Heart left ventricle (tissue), 16 donors: ENCODE measurements at regions of chr9 and their contacts with region 1.

Region 1: GRCh38 chr9:693201-694091 is 148.1 kb upstream of the DMRT1 start:
- DNase-seq: peak in 4 of 5 donors; percentile 67 to 82 (median 78)
- ATAC-seq: peak; percentile 62 to 77 (median 67)
- H3K4me3 ChIP-seq: peak overlapping the region in 11 of 12 donors; percentile 18 to 59 (median 48)
- H3K27ac ChIP-seq: peak overlapping the region; percentile 87 to 97 (median 92)
- H3K4me1 ChIP-seq: peaks cover 3 to 84% (median 59%) of the 10 kb centered on the region in 12 donors
- H3K27me3 ChIP-seq: no peaks in the 10 kb centered on the region
- CTCF ChIP-seq: peak in 1 of 12 donors; percentile 15
- POLR2A ChIP-seq: peak; percentile 8 to 73

Region 2: DNA sequence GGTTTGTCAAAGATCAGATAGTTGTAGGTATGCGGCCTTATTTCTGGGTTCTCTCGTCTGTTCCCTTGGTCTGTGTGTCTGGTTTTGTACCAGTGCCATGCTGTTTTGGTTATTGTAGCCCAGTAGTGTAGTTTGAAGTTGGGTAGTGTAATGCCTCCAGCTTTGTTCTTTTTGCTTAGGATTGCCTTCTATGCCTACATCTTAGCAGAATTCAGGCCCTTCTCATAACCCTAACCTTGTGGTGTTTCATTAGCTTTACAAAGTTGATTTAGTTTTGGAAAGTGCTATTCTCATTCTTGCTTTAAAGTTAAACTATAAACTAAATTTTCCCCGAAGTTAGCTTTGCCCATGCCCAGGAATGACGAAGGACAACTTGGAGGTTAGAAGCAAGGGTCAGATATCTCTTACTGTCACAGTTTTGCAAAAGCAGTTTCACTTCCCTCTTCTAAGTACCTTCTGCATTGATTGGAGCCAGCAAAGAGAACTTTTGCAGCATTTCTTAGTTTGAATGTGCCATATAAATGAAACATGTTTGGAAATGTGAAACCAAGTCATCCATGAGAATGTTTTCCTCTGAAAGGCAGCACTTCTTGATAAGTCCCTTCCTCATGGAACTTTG is 126.2 kb before region 1 on chr9:
- intact Hi-C with region 1: no loop called
- DNase-seq: no peak
- ATAC-seq: no peak
- H3K4me3 ChIP-seq: no peak overlapping the region
- H3K27ac ChIP-seq: peak overlapping the region in 3 of 12 donors; percentile 11 to 24 (median 20)
- H3K4me1 ChIP-seq: peaks cover 0 to 46% (median 14%) of the 10 kb centered on the region in 12 donors
- H3K27me3 ChIP-seq: no peaks in the 10 kb centered on the region
- CTCF ChIP-seq: no peak
- POLR2A ChIP-seq: no peak

Region 3: GRCh38 chr9:600007-600406 is 93.4 kb before region 1 on chr9:
- intact Hi-C with region 1: no loop called
- DNase-seq: no peak
- ATAC-seq: peak in 2 of 4 donors; percentile 43 to 55
- H3K4me3 ChIP-seq: no peak overlapping the region
- H3K27ac ChIP-seq: peak overlapping the region in 6 of 12 donors; percentile 2 to 66 (median 28)
- H3K4me1 ChIP-seq: peaks cover 0 to 23% (median 2%) of the 10 kb centered on the region in 12 donors
- H3K27me3 ChIP-seq: no peaks in the 10 kb centered on the region
- CTCF ChIP-seq: no peak
- POLR2A ChIP-seq: no peak

Region 4: DNA sequence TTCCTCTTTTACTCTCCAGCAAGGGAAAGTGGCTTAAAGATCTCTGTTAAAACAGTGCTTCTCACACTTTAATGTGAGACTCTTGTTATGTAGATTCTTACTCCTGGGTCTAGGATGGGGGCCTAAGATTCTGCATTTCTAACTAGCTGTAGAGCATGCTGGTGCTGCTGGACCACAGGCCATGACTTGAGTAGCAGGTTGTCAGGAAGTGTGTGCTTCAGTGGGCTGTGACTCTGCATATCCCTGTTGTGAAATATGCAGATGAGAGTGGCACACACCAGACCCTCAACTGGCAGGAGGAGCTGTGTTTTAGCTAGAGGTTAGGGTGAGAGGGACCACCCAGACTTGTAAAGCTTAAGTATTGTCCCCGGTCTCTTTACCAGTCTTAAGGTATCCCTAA is 43.1 kb before region 1 on chr9:
- intact Hi-C with region 1: loop called in 5 of 10 experiments (anchors 5 to 10 kb)
- DNase-seq: no peak
- ATAC-seq: peak in 1 of 4 donors; percentile 38
- H3K4me3 ChIP-seq: peak overlapping the region in 1 of 12 donors; percentile 20
- H3K27ac ChIP-seq: peak overlapping the region in 11 of 12 donors; percentile 11 to 60 (median 54)
- H3K4me1 ChIP-seq: peaks cover 8 to 78% (median 48%) of the 10 kb centered on the region in 12 donors
- H3K27me3 ChIP-seq: no peaks in the 10 kb centered on the region
- CTCF ChIP-seq: no peak
- POLR2A ChIP-seq: no peak

Region 5: GRCh38 chr9:655875-656274 is 37.6 kb before region 1 on chr9:
- intact Hi-C with region 1: loop called in 4 of 10 experiments (anchors 5 kb)
- DNase-seq: peak; percentile 89 to 97 (median 94)
- ATAC-seq: peak; percentile 65 to 87 (median 84)
- H3K4me3 ChIP-seq: peak overlapping the region in 1 of 12 donors; percentile 5
- H3K27ac ChIP-seq: peak overlapping the region; percentile 55 to 88 (median 80)
- H3K4me1 ChIP-seq: peaks cover 0 to 86% (median 51%) of the 10 kb centered on the region in 12 donors
- H3K27me3 ChIP-seq: no peaks in the 10 kb centered on the region
- CTCF ChIP-seq: no peak
- POLR2A ChIP-seq: no peak

Region 6: DNA sequence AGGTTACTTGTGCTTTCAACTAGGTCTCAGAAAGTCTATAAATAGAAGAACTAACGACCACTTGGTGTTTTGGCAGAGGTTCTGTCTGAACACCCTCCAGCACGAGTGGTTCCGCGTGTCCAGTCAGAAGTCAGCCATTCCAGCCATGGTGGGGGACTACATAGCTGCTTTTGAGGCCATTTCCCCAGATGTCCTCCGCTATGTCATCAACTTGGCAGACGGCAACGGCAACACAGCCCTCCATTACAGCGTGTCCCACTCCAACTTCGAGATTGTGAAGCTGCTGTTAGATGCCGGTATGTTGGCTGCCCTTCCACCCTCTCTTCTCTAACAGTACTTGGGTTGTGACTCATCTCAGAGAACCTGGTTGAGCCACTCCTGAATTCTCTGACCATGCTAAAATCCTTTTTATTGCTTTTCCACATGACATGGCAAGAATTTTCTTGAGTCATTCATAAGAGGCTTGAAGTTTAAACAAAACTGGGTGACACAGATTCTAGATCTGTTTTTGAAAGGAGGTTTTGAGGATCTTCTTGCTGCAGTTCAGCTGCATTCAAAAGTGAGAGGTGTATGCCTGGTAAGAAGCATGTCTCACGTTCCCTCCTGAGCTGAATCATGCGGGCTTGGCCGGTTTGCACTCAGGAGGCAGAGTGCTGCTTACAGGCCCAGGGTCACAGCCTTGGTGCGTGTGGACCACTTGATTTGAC is 44.9 kb after region 1 on chr9:
- intact Hi-C with region 1: loop called in 2 of 10 experiments (anchors 2 to 5 kb)
- DNase-seq: peak; percentile 70 to 81 (median 79)
- ATAC-seq: peak; percentile 75 to 92 (median 87)
- H3K4me3 ChIP-seq: no peak overlapping the region
- H3K27ac ChIP-seq: peak overlapping the region; percentile 69 to 95 (median 88)
- H3K4me1 ChIP-seq: peaks cover 8 to 82% (median 43%) of the 10 kb centered on the region in 12 donors
- H3K27me3 ChIP-seq: no peaks in the 10 kb centered on the region
- CTCF ChIP-seq: no peak
- POLR2A ChIP-seq: peak in 1 of 2 donors; percentile 14

Region 7: DNA sequence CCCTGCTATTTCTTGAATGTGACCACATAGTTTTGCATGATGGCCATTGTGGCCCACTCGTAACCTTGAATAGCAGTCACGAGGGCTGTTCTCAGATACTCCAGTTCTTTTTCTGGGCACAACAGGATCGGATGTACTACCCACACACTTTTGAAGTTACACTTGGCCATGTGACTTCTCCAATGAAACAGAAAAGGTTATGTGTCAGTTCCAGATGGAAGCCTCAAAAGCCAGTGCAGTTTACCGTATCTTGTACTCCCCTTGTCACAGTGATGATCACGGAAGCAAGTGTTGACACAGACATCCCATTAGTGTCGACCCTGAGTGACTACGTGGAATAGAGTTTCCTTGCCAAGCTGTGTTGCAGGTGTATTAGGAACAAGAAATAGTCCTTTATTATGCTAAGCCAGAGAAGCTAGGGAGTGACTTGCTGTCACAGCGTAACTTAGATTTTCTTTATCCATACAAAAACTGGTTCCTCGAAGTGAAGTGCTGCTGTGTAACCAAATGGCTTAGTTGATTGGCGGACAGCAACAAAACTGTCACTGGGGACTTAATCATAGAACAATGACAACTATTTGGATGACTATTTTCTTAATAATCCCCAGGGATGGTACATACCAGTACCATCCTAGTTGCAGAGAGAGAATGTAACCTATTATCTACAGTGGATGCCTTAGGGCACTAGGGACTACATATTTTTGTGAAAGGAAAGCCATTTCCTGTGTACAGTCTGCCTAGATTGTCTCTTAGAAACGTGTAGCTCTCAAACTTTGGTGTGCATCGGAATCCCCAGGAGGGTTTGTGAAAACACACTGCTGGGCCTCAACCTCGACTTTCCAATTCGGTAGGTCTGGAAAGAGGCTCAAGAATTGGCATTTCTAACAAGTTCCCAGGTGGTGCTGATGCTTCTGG is 57.9 kb after region 1 on chr9:
- intact Hi-C with region 1: loop called in 1 of 10 experiments (anchors 5 kb)
- DNase-seq: no peak
- ATAC-seq: peak; percentile 61 to 76 (median 74)
- H3K4me3 ChIP-seq: no peak overlapping the region
- H3K27ac ChIP-seq: peak overlapping the region in 10 of 12 donors; percentile 2 to 81 (median 58)
- H3K4me1 ChIP-seq: peaks cover 0 to 54% (median 32%) of the 10 kb centered on the region in 12 donors
- H3K27me3 ChIP-seq: no peaks in the 10 kb centered on the region
- CTCF ChIP-seq: no peak
- POLR2A ChIP-seq: no peak

Region 8: GRCh38 chr9:763692-764524 is 70.5 kb after region 1 on chr9:
- intact Hi-C with region 1: no loop called
- DNase-seq: peak; percentile 65 to 74 (median 72)
- ATAC-seq: peak; percentile 90 to 99 (median 96)
- H3K4me3 ChIP-seq: peak overlapping the region in 6 of 12 donors; percentile 3 to 39 (median 26)
- H3K27ac ChIP-seq: no peak overlapping the region
- H3K4me1 ChIP-seq: peaks cover 0 to 11% (median 0%) of the 10 kb centered on the region in 12 donors
- H3K27me3 ChIP-seq: peaks cover 0 to 3% (median 0%) of the 10 kb centered on the region in 9 donors
- CTCF ChIP-seq: peak; percentile 76 to 97 (median 92)
- POLR2A ChIP-seq: no peak